ENCODE measurements at regions of chr19 and their contacts with region 1.

Region 1: DNA sequence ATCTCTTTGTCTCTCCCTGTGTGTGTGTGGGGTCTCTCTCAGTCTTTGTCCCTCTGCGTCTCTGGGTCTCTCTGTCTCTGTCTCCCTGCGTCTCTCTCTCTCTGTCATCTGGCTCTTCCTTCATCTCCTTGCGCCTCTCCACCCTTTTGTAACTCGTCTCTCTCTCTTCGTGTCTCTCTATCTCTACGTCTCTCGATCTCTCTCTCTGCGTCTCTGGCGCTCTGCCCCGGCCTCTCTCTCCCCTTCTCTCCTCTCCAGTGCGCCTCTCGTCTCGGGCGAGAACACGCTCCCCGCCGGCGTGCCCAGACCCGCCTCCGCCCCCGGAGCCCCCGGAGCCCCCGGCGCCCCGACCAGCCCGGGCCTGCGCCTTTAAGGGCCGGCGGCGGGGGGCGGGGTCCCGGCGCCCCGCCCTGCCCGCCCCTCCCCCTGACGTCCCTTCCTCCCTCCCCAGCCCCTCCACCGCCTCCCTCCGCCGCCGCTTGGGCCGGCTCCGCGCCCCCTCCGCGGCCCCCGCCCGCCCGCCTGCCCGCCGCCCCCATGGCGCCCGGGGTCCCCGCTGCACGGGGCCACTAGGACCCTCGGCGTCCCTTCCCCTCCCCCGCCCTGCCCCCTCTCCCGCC is at the start of gene MARK4:
- DNase-seq: peak; percentile 72
- ATAC-seq: peak; percentile 67
- H3K4me3 Mint-ChIP-seq: peak within 1 kb of the TSS; percentile 77
- H3K27ac Mint-ChIP-seq: peak within 1 kb of the TSS; percentile 76
- H3K4me1 Mint-ChIP-seq: peaks cover 29% of the 10 kb centered on the region
- H3K27me3 Mint-ChIP-seq: peaks cover 2% of the 10 kb centered on the region
- total RNA-seq, gene MARK4: 19.1 to 19.6 TPM

Region 2: GRCh38 chr19:45038931-45039893 is 211.7 kb before region 1 on chr19 and contains the start of gene CLASRP:
- CTCF ChIA-PET with region 1: no interaction called
- POLR2A ChIA-PET with region 1: no interaction called
- intact Hi-C with region 1: loop called in 1 of 2 experiments (anchors 1 kb)
- DNase-seq: peak; percentile 94
- ATAC-seq: peak; percentile 96
- H3K4me3 Mint-ChIP-seq: peak within 1 kb of the TSS; percentile 97
- H3K27ac Mint-ChIP-seq: peak within 1 kb of the TSS; percentile 96
- H3K4me1 Mint-ChIP-seq: peaks cover 32% of the 10 kb centered on the region
- H3K27me3 Mint-ChIP-seq: no peaks in the 10 kb centered on the region
- total RNA-seq, gene CLASRP: 101 to 103 TPM

Region 3: DNA sequence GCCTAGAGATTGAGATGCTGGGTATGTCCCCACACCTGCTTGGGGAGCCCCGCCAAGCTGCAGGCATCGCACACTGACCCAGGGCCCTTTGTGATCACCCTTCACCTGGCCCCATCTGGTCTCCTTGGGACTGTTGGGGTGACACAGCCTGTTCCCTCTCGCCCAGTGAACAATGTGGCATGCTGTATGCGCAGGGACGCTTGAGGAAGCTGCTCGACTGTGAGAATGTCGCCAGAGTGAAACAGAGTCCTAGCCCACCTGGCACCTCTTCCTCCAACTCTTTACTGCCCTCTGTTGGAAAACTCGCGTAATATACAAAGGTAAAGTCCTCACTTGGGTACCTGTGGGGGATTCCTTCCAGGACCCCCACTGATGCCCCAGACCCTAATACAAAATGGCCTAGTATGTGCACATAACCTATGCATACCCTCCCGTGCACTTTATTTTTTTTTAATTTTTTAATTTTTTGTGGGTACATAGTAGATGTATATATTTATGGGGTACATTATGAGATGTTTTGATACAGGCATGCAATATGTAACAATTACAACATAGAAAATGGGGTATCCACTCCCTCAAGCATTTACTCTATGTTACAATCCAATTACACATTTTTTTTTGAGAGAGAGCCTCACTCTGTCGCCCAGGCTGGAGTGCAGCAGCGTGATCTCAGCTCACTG is 63.4 kb before region 1 on chr19:
- CTCF ChIA-PET with region 1: interaction called, 4 read pairs
- POLR2A ChIA-PET with region 1: no interaction called
- intact Hi-C with region 1: loop called in 1 of 2 experiments (anchors 2 kb)
- DNase-seq: peak; percentile 38
- ATAC-seq: peak; percentile 83
- H3K4me3 Mint-ChIP-seq: no peak overlapping the region
- H3K27ac Mint-ChIP-seq: no peak overlapping the region
- H3K4me1 Mint-ChIP-seq: peaks cover 5% of the 10 kb centered on the region
- H3K27me3 Mint-ChIP-seq: no peaks in the 10 kb centered on the region

Region 4: GRCh38 chr19:45323671-45324081 is 72.7 kb after region 1 on chr19:
- CTCF ChIA-PET with region 1: no interaction called
- POLR2A ChIA-PET with region 1: no interaction called
- intact Hi-C with region 1: loop called in 1 of 2 experiments (anchors 1 kb)
- DNase-seq: no peak
- ATAC-seq: no peak
- H3K4me3 Mint-ChIP-seq: no peak overlapping the region
- H3K27ac Mint-ChIP-seq: no peak overlapping the region
- H3K4me1 Mint-ChIP-seq: no peaks in the 10 kb centered on the region
- H3K27me3 Mint-ChIP-seq: peaks cover 12% of the 10 kb centered on the region

Region 5: DNA sequence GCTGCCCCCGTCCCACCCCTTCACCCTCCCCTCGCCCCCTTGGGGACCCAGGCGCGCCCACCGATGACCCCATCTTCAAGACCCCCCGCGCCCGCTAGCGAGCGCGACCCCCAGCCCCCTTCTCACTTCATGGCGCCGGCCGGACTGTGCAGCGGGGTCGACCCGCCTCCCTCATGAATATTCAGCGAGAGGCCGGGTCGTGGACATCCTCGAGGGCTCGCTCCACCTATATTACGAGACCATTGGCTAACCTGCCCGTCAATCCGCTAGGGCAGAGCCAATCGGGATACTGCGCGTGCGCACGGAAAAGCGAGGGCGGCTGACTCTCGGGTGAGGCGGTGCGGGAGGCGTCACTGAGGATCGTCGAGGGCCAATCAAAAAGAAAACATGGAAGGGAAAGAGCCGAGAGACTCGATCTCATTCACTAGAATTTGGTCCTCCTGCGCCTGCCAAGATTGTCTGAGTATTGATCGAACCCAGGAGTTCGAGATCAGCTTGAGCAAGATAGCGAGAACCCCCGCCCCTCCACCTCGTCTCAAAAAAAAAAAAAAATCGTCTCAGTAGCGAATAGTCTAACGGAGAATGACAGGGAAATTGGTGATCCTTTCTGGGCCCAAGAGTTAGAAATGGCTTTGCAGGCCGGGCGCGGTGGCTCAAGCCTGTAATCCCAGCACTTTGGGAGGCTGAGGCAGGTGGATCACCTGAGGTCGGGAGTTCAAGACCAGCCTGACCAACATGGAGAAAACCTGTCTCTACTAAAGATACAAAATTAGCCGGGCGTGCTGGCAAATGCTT is 119.7 kb after region 1 on chr19 and contains the start of gene ERCC2:
- CTCF ChIA-PET with region 1: no interaction called
- POLR2A ChIA-PET with region 1: no interaction called
- intact Hi-C with region 1: loop called in 1 of 2 experiments (anchors 1 kb)
- DNase-seq: peak; percentile 100
- ATAC-seq: peak; percentile 100
- H3K4me3 Mint-ChIP-seq: peak within 1 kb of the TSS; percentile 79
- H3K27ac Mint-ChIP-seq: peak within 1 kb of the TSS; percentile 97
- H3K4me1 Mint-ChIP-seq: peaks cover 8% of the 10 kb centered on the region
- H3K27me3 Mint-ChIP-seq: no peaks in the 10 kb centered on the region
- total RNA-seq, gene ERCC2: 27.5 to 30.4 TPM